ENCODE measurements at regions of chr10 and their contacts with region 1.

Region 1: GRCh38 chr10:120451968-120452367 is 5.1 kb upstream of the PLPP4 start:
- DNase-seq: no peak
- H3K4me3 ChIP-seq: no peak overlapping the region
- H3K27ac ChIP-seq: no peak overlapping the region
- H3K4me1 ChIP-seq: peaks cover 6% of the 10 kb centered on the region
- H3K27me3 ChIP-seq: no peaks in the 10 kb centered on the region
- CTCF ChIP-seq: no peak
- POLR2A ChIP-seq: no peak

Region 2: DNA sequence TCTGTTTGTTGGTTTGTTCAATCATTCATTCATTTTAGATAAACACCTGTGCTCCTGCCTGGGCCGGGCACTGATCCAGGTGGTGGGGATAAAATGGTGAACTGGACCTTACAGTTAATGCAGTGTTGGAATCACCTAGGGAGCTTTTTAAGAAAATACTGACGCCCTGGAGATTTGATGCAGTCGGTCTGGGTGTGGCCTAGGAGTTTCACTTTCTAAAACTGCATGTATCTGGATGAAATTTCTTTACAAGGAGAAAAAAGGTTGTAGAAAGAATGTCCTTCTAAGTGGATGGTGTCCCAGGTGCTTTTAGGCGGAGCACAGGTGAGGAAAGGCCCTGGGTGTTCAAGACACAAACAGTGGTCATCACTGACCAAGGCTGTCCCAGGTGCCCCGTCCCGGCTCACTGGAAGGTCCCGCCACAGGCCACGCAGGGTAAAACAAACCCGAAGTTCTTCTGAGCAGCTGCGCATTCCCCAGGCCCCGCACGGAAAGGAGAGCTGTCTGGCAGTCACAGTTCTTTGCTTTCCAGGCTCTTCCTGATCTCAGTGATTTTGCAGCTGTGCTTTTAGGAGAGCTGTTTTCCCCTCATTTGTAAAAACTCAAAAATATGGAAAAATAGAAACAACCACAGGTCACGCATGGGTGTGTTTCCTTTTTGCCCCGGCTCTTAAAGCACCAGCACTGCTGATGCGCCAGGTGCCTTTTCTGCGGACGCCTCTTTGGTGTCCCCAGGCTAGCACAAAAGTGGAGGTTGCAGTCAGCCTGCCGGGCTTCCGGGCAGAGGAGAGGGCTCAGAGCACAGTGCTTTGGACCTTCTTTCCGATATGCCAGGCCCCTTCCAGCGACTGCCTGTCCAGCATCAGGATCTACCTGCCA is 1082.7 kb before region 1 on chr10:
- intact Hi-C with region 1: no loop called
- DNase-seq: no peak
- H3K4me3 ChIP-seq: no peak overlapping the region
- H3K27ac ChIP-seq: peak overlapping the region; percentile 80
- H3K4me1 ChIP-seq: peaks cover 81% of the 10 kb centered on the region
- H3K27me3 ChIP-seq: no peaks in the 10 kb centered on the region
- CTCF ChIP-seq: no peak
- POLR2A ChIP-seq: no peak

Region 3: GRCh38 chr10:120493411-120494312 is 41.7 kb after region 1 on chr10:
- intact Hi-C with region 1: loop called (anchors 1 kb)
- DNase-seq: peak; percentile 54 to 93
- H3K4me3 ChIP-seq: no peak overlapping the region
- H3K27ac ChIP-seq: no peak overlapping the region
- H3K4me1 ChIP-seq: no peaks in the 10 kb centered on the region
- H3K27me3 ChIP-seq: no peaks in the 10 kb centered on the region
- CTCF ChIP-seq: no peak
- POLR2A ChIP-seq: no peak